Caco-2 (cell line): ENCODE measurements at regions of chr10 and their contacts with region 1.

Region 1: DNA sequence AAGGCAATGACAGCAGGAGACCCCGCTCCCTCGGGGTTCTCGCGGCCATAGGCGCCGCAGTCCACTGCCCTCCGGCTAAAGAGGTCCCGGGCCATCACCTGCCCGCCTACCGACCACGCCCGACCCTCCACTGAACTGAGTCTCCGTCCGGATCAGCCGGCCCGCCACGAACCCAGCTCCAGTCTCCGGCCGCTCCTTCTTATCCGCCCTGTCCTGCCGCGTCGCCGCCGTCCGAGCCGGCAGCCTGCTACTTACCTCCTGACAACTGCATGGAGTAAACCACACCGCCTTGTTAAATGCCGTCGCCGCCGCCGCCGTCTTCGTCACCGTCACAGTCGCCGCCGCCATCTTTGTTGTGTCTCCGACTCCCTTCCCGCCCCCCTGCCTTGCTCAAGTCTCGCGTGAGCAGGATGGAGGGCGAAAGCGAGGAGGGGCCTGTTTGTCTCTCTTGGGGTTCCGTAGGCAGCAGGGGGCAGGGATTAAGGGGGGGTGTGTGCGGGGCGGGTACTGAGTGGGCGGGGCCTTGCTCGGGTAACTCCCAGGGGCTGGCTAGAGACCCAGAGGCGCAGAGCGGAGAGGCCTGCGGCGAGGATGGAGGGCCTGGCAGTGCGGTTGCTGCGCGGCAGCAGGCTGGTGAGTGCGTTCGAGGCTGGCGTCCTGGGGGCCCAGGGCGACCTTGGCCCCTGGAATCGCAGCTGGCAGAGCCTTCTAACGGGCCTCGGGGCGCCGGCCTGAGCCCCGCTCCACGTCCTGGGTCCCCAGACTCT is at the starts of genes ACADSB and IKZF5:
- DNase-seq: peak; percentile 96 to 98
- H3K4me3 ChIP-seq: peak within 1 kb of the TSS; percentile 99
- H3K4me3 Mint-ChIP-seq: peak within 1 kb of the TSS; percentile 91
- H3K27ac Mint-ChIP-seq: peak within 1 kb of the TSS; percentile 98
- H3K4me1 ChIP-seq: peaks cover 9% of the 10 kb centered on the region; the same call in 1 of the 2 replicates
- H3K4me1 Mint-ChIP-seq: peaks cover 6% of the 10 kb centered on the region
- H3K27me3 ChIP-seq: no peaks in the 10 kb centered on the region
- H3K27me3 Mint-ChIP-seq: no peaks in the 10 kb centered on the region
- CTCF ChIP-seq: no peak
- total RNA-seq, gene ACADSB: 23.5 and 25.3 TPM in 2 replicates
- total RNA-seq, gene IKZF5: 10.4 and 11.6 TPM in 2 replicates

Region 2: GRCh38 chr10:122953827-122954730 is 54.5 kb before region 1 on chr10 and contains the start of gene C10orf88:
- CTCF ChIA-PET with region 1: interaction called, 3 read pairs
- POLR2A ChIA-PET with region 1: no interaction called
- intact Hi-C with region 1: loop called (anchors 2 kb)
- DNase-seq: peak; percentile 97 to 99
- H3K4me3 ChIP-seq: peak within 1 kb of the TSS; percentile 68
- H3K4me3 Mint-ChIP-seq: peak within 1 kb of the TSS; percentile 91
- H3K27ac Mint-ChIP-seq: peak within 1 kb of the TSS; percentile 79
- H3K4me1 ChIP-seq: peaks cover 26% of the 10 kb centered on the region
- H3K4me1 Mint-ChIP-seq: peaks cover 20% of the 10 kb centered on the region
- H3K27me3 ChIP-seq: no peaks in the 10 kb centered on the region
- H3K27me3 Mint-ChIP-seq: no peaks in the 10 kb centered on the region
- CTCF ChIP-seq: no peak
- total RNA-seq, gene C10orf88: 8.7 and 11.7 TPM in 2 replicates

Region 3: GRCh38 chr10:122980209-122981065 is 28.2 kb before region 1 on chr10 and contains the start of gene PSTK:
- CTCF ChIA-PET with region 1: no interaction called
- POLR2A ChIA-PET with region 1: interaction called, 11 read pairs
- intact Hi-C with region 1: loop called (anchors 2 kb)
- DNase-seq: peak; percentile 92 to 93
- H3K4me3 ChIP-seq: peak within 1 kb of the TSS; percentile 94
- H3K4me3 Mint-ChIP-seq: peak within 1 kb of the TSS; percentile 90
- H3K27ac Mint-ChIP-seq: peak within 1 kb of the TSS; percentile 96
- H3K4me1 ChIP-seq: no peaks in the 10 kb centered on the region
- H3K4me1 Mint-ChIP-seq: peaks cover 5% of the 10 kb centered on the region
- H3K27me3 ChIP-seq: no peaks in the 10 kb centered on the region
- H3K27me3 Mint-ChIP-seq: no peaks in the 10 kb centered on the region
- CTCF ChIP-seq: peak; percentile 93 to 95
- total RNA-seq, gene PSTK: 8.2 and 9.1 TPM in 2 replicates

Region 4: DNA sequence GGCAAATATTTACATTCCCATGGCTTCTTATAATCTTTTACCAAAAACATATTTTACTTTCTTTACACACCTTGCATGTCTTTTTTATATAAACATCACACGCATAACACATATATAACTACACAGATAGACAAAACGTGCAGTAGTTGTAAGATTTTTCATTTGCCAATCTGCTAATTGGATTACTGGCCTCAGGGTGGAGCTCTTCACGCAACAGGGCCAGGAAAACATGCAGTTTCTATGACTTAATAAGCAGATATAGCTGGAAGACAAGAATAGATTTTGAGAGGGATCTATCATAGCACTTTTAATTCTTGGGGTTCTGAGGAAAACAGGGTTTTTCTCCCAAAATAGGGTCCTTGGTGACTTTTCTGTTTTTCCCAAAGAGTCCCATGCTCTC is 12.9 kb after region 1 on chr10:
- CTCF ChIA-PET with region 1: no interaction called
- POLR2A ChIA-PET with region 1: interaction called, 4 read pairs
- intact Hi-C with region 1: loop called (anchors 1 kb)
- DNase-seq: no peak
- H3K4me3 ChIP-seq: no peak overlapping the region
- H3K4me3 Mint-ChIP-seq: no peak overlapping the region
- H3K27ac Mint-ChIP-seq: no peak overlapping the region
- H3K4me1 ChIP-seq: no peaks in the 10 kb centered on the region
- H3K4me1 Mint-ChIP-seq: peaks cover 7% of the 10 kb centered on the region
- H3K27me3 ChIP-seq: no peaks in the 10 kb centered on the region
- H3K27me3 Mint-ChIP-seq: no peaks in the 10 kb centered on the region
- CTCF ChIP-seq: peak; percentile 43 to 44